ENCODE measurements at regions of chr3 and their contacts with region 1.

Region 1: DNA sequence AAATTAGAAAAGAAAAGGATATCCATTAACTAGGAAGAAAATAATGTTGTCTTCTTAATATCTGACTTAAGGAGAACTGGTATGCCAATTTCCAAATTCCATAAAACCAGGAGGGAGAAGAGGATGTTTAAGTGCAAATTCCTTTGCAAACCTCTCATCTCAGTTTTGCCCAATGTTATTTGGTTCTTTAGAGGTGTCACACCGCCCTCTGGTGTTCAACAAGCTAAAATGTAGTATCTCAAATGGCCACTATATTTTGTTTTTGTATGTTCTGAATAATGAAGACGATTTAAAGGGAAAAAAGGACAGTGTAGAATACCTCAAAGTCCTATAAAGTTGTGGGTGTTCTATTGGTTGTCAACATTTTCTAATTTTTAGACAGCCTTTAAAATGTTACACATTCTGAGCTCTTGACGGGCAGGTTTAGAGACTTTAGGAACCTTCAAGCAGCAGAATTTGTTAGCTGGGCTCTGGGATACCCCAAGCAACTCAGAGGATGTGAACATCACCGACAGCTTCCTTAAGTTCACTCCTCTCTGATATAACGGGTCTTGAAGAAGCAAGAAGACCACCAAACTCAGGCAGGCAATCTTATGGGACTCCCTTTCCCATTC is 458.3 kb downstream of the MFSD1 start:
- DNase-seq: no peak
- ATAC-seq: peak; percentile 79
- H3K4me3 ChIP-seq: no peak overlapping the region
- H3K27ac ChIP-seq: no peak overlapping the region
- H3K4me1 ChIP-seq: no peaks in the 10 kb centered on the region
- H3K27me3 ChIP-seq: no peaks in the 10 kb centered on the region; a peak in 1 of 4 replicates
- CTCF ChIP-seq: peak; percentile 50 to 70 (median 59); a peak in 5 of 6 replicates
- EP300 ChIP-seq: no peak
- POLR2A ChIP-seq: no peak
- RAD21 ChIP-seq: peak; percentile 91

Region 2: DNA sequence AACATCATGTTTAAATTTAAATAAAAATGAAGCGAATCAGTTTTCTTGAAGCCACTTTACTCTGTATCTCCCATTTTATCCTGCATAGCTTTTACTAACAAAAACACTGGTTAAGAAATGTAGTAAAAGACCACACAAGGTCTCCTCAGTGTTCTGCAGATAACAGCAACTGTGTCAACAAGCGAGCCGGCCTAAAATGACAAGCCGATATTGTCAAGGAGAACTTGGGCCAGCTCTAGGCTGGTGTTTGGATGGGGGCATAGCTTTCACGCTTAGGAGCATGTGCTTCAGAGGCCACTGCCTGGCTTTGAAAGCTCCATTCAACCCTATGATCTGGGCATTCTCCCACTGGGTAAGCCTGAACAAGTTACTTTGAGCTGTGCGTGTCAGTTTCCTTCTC is 420.2 kb before region 1 on chr3:
- CTCF ChIA-PET with region 1: interaction called, 141 read pairs
- POLR2A ChIA-PET with region 1: no interaction called
- RAD21 ChIA-PET with region 1: interaction called, 62 read pairs
- SMC1A ChIA-PET with region 1: interaction called, 41 read pairs
- in situ Hi-C with region 1: loop called (anchors 5 kb)
- intact Hi-C with region 1: loop called (anchors 1 kb)
- DNase-seq: no peak
- ATAC-seq: no peak
- H3K4me3 ChIP-seq: no peak overlapping the region
- H3K27ac ChIP-seq: no peak overlapping the region
- H3K4me1 ChIP-seq: no peaks in the 10 kb centered on the region
- H3K27me3 ChIP-seq: no peaks in the 10 kb centered on the region
- CTCF ChIP-seq: no peak
- EP300 ChIP-seq: no peak
- POLR2A ChIP-seq: no peak
- RAD21 ChIP-seq: no peak

Region 3: DNA sequence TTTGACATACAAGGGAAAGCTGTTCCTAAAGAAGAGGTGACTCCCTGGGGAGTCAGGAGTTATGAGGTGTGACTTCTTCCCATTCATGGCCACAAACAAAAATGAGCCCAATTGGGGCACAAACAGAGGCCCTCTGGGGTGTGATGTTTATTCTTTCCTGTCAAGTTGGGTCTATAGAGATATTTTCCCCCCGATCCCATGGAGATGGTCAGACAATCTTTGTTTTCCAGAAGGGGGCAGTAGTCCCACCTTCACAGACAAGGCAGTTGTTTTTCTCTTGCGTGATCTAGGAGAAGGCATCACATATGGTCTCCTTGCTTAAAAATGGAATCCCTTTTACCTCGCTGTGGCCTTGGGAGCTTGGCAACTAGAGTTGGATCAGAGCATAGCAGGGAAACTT is 348.0 kb before region 1 on chr3:
- CTCF ChIA-PET with region 1: interaction called, 26 read pairs
- POLR2A ChIA-PET with region 1: no interaction called
- RAD21 ChIA-PET with region 1: interaction called, 5 read pairs
- SMC1A ChIA-PET with region 1: interaction called, 7 read pairs
- in situ Hi-C with region 1: loop called (anchors 5 kb)
- intact Hi-C with region 1: no loop called
- DNase-seq: no peak
- ATAC-seq: no peak
- H3K4me3 ChIP-seq: no peak overlapping the region
- H3K27ac ChIP-seq: no peak overlapping the region
- H3K4me1 ChIP-seq: no peaks in the 10 kb centered on the region
- H3K27me3 ChIP-seq: no peaks in the 10 kb centered on the region; a peak in 1 of 4 replicates
- CTCF ChIP-seq: 0 out of 6 replicates have a peak, but pooled peaks of 1 of the 3 experiments have one; percentile 6
- EP300 ChIP-seq: no peak
- POLR2A ChIP-seq: no peak
- RAD21 ChIP-seq: no peak

Region 4: GRCh38 chr3:159130108-159130507 is 130.0 kb before region 1 on chr3:
- CTCF ChIA-PET with region 1: interaction called, 14 read pairs
- POLR2A ChIA-PET with region 1: no interaction called
- RAD21 ChIA-PET with region 1: interaction called, 4 read pairs
- SMC1A ChIA-PET with region 1: interaction called, 5 read pairs
- in situ Hi-C with region 1: loop called (anchors 5 kb)
- intact Hi-C with region 1: loop called (anchors 1 kb)
- DNase-seq: no peak
- ATAC-seq: peak; percentile 36; the same call in 1 of the 3 replicates
- H3K4me3 ChIP-seq: no peak overlapping the region
- H3K27ac ChIP-seq: no peak overlapping the region
- H3K4me1 ChIP-seq: no peaks in the 10 kb centered on the region
- H3K27me3 ChIP-seq: no peaks in the 10 kb centered on the region
- CTCF ChIP-seq: peak; percentile 34 to 62 (median 40); a peak in 5 of 6 replicates
- EP300 ChIP-seq: no peak
- POLR2A ChIP-seq: no peak
- RAD21 ChIP-seq: peak; percentile 67

Region 5: GRCh38 chr3:159273608-159274007 is 13.5 kb after region 1 on chr3:
- CTCF ChIA-PET with region 1: interaction called, 10 read pairs
- POLR2A ChIA-PET with region 1: no interaction called
- RAD21 ChIA-PET with region 1: no interaction called
- SMC1A ChIA-PET with region 1: no interaction called
- in situ Hi-C with region 1: no loop called
- intact Hi-C with region 1: no loop called
- DNase-seq: no peak
- ATAC-seq: 0 out of 3 replicates have a peak, but pooled peaks have one; percentile 31
- H3K4me3 ChIP-seq: no peak overlapping the region
- H3K27ac ChIP-seq: no peak overlapping the region
- H3K4me1 ChIP-seq: no peaks in the 10 kb centered on the region
- H3K27me3 ChIP-seq: no peaks in the 10 kb centered on the region
- CTCF ChIP-seq: no peak
- EP300 ChIP-seq: no peak
- POLR2A ChIP-seq: no peak
- RAD21 ChIP-seq: no peak

Measured in GM12878 (cell line).